ENCODE measurements at regions of chr2 and their contacts with region 1.

Region 1: GRCh38 chr2:153871231-153872221 is at the start of gene GALNT13:
- DNase-seq: no peak
- ATAC-seq: peak; percentile 78
- total RNA-seq, gene GALNT13: 0.49 TPM

Region 2: GRCh38 chr2:153543639-153544071 is 327.9 kb before region 1 on chr2:
- intact Hi-C with region 1: no loop called
- DNase-seq: no peak
- ATAC-seq: no peak

Region 3: DNA sequence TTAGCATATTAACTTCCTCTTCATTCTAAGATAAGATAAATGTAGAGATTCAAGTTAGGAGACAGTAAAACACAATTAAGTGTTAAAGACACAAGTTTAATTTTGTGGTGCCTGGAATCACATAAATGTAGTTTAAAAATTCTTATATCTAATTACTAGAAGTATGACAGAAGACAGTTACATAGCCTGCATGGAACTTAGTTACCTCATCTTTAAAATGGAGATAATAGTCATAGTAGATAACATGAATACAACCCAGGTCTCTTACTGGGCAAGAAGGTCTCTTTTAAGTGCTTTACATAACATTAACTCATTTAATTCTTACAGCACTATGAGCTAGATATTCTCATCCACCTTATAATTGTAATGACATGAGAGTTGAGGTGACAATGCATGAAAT is 15.3 kb after region 1 on chr2:
- intact Hi-C with region 1: loop called (anchors 1 kb)
- DNase-seq: no peak
- ATAC-seq: no peak

Region 4: DNA sequence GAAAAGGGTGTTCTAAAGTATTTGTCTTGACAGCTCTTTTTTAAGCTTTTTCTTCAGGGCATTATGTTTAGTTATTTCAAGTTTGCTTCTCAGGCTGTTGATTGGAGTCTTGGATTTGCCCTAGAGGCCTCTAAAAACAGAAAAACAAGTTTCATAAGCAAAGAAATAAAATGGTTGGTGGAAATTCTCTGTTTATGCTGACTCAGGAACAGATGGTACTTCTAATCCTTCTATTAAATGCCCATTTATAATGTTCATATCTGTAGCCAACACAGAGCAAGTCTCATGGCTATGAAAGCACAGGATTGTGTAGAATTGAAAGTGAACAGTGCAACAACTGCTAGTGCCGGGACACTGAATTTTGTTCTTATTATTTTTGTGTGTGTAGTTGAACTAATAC is 887.3 kb after region 1 on chr2:
- intact Hi-C with region 1: no loop called
- DNase-seq: no peak
- ATAC-seq: no peak